ENCODE measurements at regions of chr12 and their contacts with region 1.

Region 1: DNA sequence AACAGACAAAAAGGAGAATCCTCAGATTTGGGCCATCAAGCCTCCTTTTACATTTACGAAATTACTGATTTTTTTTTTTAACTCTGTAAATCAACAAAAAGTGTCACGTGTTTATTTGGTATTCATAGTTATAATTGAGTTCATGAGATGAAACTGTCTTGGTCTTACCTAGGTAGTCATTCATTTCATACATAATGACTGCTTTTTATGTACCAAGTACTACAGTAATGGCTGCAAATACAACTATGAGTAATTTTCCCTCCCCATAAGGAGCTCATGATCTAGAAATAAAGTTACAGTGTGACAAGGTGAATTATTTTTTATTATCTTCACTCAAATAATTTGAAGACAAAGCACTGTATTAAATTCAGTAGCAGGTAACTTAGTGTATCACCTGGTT is 6.4 kb upstream of the TBK1 start:
- DNase-seq: no peak
- ATAC-seq: no peak
- H3K4me3 ChIP-seq: no peak overlapping the region
- H3K27ac ChIP-seq: no peak overlapping the region
- H3K4me1 ChIP-seq: peaks cover 0 to 1% of the 10 kb centered on the region in 2 experiments; a peak in 2 of 5 replicates
- H3K27me3 ChIP-seq: no peaks in the 10 kb centered on the region
- CTCF ChIP-seq: no peak
- EP300 ChIP-seq: no peak
- POLR2A ChIP-seq: no peak
- RAD21 ChIP-seq: no peak

Region 2: DNA sequence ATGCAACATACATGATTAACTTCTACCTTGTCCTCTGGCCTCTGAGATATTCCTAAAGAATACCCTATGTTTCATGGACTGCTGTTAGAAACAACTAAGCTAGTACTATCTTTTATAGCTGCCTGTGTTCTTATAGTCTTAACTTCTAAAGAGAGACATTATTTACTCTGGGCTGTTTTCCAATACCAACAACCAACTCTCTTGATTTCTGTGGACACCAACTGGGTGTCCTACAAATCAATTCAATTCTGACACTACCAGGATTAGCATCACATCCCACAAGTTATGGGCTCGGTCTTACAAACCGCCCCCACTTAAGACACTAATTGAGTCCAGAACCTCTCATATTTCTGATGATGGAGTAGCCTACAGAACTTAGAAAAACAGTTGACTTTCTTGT is 33.0 kb before region 1 on chr12:
- CTCF ChIA-PET with region 1: no interaction called
- POLR2A ChIA-PET with region 1: interaction called, 4 read pairs
- in situ Hi-C with region 1: loop called (anchors 5 kb)
- intact Hi-C with region 1: loop called (anchors 5 kb)
- DNase-seq: no peak
- ATAC-seq: no peak
- H3K4me3 ChIP-seq: no peak overlapping the region
- H3K27ac ChIP-seq: no peak overlapping the region
- H3K4me1 ChIP-seq: peaks cover 8 to 19% of the 10 kb centered on the region in 2 experiments; a peak in 4 of 5 replicates
- H3K27me3 ChIP-seq: no peaks in the 10 kb centered on the region
- CTCF ChIP-seq: no peak
- EP300 ChIP-seq: no peak
- POLR2A ChIP-seq: no peak
- RAD21 ChIP-seq: no peak

Region 3: GRCh38 chr12:64946132-64946829 is 500.8 kb after region 1 on chr12:
- CTCF ChIA-PET with region 1: no interaction called
- POLR2A ChIA-PET with region 1: no interaction called
- in situ Hi-C with region 1: no loop called
- intact Hi-C with region 1: no loop called
- DNase-seq: no peak
- ATAC-seq: no peak
- H3K4me3 ChIP-seq: no peak overlapping the region
- H3K27ac ChIP-seq: no peak overlapping the region
- H3K4me1 ChIP-seq: no peaks in the 10 kb centered on the region
- H3K27me3 ChIP-seq: peaks cover 0 to 11% of the 10 kb centered on the region in 2 experiments; a peak in 2 of 5 replicates
- CTCF ChIP-seq: no peak
- EP300 ChIP-seq: no peak
- POLR2A ChIP-seq: no peak
- RAD21 ChIP-seq: no peak

Measured in K562 (cell line).